GM10248 (cell line): ENCODE measurements at regions of chr21 and their contacts with region 1.

Region 1: DNA sequence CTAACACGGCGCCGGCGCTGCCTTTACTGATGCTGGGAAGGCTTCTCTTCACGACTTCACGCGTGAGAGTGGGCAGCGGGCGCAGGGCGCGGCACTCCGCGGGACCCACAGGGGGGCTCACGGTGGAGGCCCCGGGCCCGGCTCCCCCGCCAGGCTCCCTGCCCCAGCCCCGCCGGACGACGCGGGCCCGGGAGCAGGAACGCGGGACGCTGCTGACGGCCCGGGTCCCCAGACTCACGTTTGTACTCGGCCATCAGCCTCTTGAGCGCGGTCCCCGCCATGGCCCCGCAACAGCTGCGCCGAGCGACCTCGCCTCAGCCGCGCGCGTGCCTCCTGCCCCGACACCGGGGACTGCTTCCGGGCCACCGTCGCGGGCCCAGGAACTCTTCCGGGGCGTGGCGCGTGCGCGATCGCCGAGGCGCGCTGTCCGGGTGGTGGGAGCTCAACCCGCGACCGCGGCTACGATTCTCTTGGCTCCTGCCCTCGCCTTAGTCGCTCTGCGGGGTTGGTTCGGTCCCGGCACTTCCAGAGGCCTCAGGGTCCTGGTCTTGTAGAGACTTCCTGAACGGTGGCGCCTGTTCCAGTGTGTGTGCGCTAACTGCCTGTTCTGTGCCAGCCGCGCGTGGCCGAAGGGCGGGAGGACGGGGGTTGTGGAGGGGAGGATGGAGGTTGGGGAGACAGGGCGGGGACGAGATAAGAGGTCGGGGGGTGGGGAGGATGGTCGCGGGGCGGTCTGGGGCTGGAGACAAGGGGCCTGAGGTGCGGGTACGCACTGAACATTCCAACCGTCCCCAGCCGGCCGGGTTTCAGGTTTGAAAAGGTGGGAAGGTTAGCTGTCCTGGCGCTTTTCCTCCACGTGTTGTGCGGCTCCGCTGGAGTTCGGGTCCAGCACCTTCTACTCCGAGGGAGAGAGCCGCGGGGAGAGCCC is at the start of gene UBE2G2:
- DNase-seq: peak; percentile 97
- CTCF ChIP-seq: no peak

Region 2: GRCh38 chr21:44510508-44511210 is 291.1 kb before region 1 on chr21:
- CTCF ChIA-PET with region 1: interaction called, 19 read pairs
- POLR2A ChIA-PET with region 1: no interaction called
- DNase-seq: peak; percentile 85
- CTCF ChIP-seq: peak; percentile 77

Region 3: GRCh38 chr21:44815852-44816628 is 14.3 kb after region 1 on chr21:
- CTCF ChIA-PET with region 1: interaction called, 14 read pairs
- POLR2A ChIA-PET with region 1: no interaction called
- DNase-seq: no peak
- CTCF ChIP-seq: no peak

Region 4: DNA sequence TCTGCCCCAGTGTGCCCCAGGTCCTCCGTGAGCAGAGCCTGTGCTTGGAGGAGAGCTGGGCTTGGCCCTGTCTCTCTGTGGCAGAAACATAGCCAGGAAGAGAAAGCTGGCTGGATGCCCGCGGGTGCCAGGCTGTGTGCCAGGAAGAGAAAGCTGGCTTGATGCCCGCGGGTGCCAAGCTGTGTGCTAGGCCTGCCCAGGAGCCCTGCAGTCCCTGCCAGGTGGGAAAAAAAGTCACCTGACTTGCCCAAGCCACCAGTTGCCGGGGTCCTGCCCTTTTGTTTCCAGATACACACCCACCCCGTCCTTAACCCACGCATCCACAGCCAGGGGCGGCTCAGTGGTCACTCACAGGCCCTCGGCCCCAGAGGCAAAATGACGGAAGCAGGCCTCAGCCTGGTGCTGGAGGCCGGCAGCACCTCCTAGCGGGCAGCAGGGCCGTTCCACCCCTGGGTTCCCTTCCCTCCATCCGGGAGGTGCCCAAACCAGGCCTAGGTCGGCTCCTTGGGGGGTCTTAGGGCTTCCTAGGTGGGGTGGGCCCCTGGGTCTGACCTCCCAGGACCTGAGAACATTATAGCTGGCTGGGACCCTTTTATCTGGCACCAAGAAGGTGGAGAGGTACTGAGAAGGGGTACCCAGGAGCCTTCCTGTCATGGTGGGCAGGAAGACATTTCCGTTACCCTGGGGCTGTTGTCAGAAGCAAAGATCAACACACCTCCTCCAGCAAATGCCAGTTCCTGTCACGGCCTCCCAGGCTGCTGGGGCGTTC is 109.8 kb after region 1 on chr21:
- CTCF ChIA-PET with region 1: interaction called, 11 read pairs
- POLR2A ChIA-PET with region 1: no interaction called
- DNase-seq: no peak
- CTCF ChIP-seq: peak; percentile 47